GM12878 (cell line): ENCODE measurements at regions of chr19 and their contacts with region 1.

Region 1: GRCh38 chr19:4352701-4353121 is 9.3 kb downstream of the MPND start:
- DNase-seq: no peak
- ATAC-seq: peak; percentile 90
- H3K4me3 ChIP-seq: no peak overlapping the region
- H3K27ac ChIP-seq: no peak overlapping the region
- H3K4me1 ChIP-seq: no peaks in the 10 kb centered on the region
- H3K27me3 ChIP-seq: no peaks in the 10 kb centered on the region
- CTCF ChIP-seq: peak; percentile 57 to 91 (median 69)
- EP300 ChIP-seq: no peak
- POLR2A ChIP-seq: no peak
- RAD21 ChIP-seq: peak; percentile 73

Region 2: GRCh38 chr19:3964260-3965204 is 388.2 kb before region 1 on chr19:
- CTCF ChIA-PET with region 1: no interaction called
- POLR2A ChIA-PET with region 1: no interaction called
- RAD21 ChIA-PET with region 1: no interaction called
- SMC1A ChIA-PET with region 1: no interaction called
- in situ Hi-C with region 1: no loop called
- intact Hi-C with region 1: no loop called
- DNase-seq: no peak
- ATAC-seq: no peak
- H3K4me3 ChIP-seq: no peak overlapping the region
- H3K27ac ChIP-seq: no peak overlapping the region
- H3K4me1 ChIP-seq: no peaks in the 10 kb centered on the region; the same call in 1 of the 2 replicates
- H3K27me3 ChIP-seq: no peaks in the 10 kb centered on the region
- CTCF ChIP-seq: no peak
- EP300 ChIP-seq: no peak
- POLR2A ChIP-seq: no peak
- RAD21 ChIP-seq: no peak

Region 3: DNA sequence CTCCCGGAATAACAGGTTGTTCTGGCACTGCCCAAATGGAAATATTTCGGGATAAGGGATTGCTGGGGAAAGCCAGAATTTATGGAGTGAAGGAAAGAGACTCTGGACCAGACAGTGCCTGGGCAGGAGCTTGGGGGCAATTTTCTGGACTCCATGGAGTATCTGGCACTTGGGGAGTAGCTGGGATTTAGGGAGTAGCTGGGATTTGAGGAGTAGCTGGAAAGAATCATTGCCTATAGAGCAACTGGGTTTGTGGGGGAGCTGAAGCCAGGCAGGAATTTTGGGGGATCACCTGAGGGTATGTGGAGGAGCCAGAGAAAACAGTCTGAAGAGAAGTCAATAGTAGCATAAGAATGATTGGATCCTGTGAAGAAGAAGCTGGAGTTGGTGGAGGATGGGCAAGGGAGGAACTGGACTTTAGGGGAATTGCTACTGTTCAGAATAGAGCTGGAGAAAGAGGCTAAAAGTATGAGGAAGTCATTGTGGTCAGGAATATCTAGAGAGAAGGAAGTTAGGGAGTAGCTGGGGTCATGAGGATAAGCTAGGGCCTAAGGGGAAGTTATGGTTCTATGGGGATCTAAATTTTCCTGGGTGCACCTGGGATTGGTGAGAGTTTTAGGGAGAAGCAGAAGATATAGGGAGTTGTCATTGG is 33.5 kb before region 1 on chr19:
- CTCF ChIA-PET with region 1: interaction called, 13 read pairs
- POLR2A ChIA-PET with region 1: no interaction called
- RAD21 ChIA-PET with region 1: no interaction called
- SMC1A ChIA-PET with region 1: no interaction called
- in situ Hi-C with region 1: no loop called
- intact Hi-C with region 1: no loop called
- DNase-seq: no peak
- ATAC-seq: no peak
- H3K4me3 ChIP-seq: no peak overlapping the region
- H3K27ac ChIP-seq: no peak overlapping the region
- H3K4me1 ChIP-seq: no peaks in the 10 kb centered on the region
- H3K27me3 ChIP-seq: no peaks in the 10 kb centered on the region
- CTCF ChIP-seq: no peak
- EP300 ChIP-seq: no peak
- POLR2A ChIP-seq: no peak
- RAD21 ChIP-seq: no peak

Region 4: DNA sequence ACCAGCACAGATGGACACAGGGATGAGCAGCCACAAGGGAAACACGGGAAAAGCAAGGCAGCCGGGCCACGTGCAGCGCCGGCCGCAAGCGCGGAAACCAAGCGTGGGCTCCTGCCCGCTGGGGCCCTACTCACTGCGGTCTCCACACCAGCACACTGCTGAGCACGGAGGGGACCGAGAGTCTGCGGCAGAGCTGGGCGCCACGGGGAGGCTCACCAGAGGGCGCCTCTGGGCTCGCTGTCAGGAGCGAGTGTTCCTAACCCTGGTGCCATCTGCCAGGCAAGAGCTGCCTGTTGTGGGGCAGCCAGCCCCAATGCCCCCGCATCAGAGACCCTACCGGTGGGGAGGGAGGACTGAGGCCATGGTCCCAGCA is 17.2 kb after region 1 on chr19:
- CTCF ChIA-PET with region 1: interaction called, 17 read pairs
- POLR2A ChIA-PET with region 1: interaction called, 3 read pairs
- RAD21 ChIA-PET with region 1: no interaction called
- SMC1A ChIA-PET with region 1: interaction called, 5 read pairs
- in situ Hi-C with region 1: no loop called
- intact Hi-C with region 1: no loop called
- DNase-seq: no peak
- ATAC-seq: peak; percentile 83
- H3K4me3 ChIP-seq: peak overlapping the region; percentile 71
- H3K27ac ChIP-seq: peak overlapping the region; percentile 98
- H3K4me1 ChIP-seq: peaks cover 61% of the 10 kb centered on the region
- H3K27me3 ChIP-seq: no peaks in the 10 kb centered on the region
- CTCF ChIP-seq: peak; percentile 63 to 80 (median 74)
- EP300 ChIP-seq: 0 out of 4 replicates have a peak, but pooled peaks of 1 of the 2 experiments have one; percentile 22
- POLR2A ChIP-seq: no peak; the same call in none of the 2 replicates
- RAD21 ChIP-seq: peak; percentile 49; the same call in 1 of the 2 replicates